Astrocyte of the cerebellum (primary cell): ENCODE measurements at regions of chrX and their contacts with region 1.

Region 1: DNA sequence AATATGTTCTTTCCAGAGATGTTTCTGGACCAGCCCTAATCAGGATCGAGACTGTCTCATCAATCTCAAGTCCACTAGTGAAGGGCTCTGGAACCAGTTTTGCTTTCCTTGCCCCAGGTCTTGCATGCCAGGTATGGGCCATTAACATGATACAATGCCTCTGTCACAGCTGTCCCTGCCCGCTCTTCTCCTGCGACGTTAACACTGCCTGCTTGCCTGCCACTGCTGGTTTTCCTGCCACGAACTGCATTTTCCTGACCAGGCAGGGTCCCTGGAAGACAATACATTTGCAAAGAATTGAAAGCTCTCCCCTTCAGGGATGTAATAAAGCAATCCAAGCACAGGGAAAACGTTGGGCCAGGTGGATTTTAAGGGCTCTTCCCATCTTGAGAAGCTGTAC is 200.3 kb downstream of the MID1 start:
- DNase-seq: no peak
- H3K4me3 ChIP-seq: no peak overlapping the region
- CTCF ChIP-seq: no peak

Region 2: DNA sequence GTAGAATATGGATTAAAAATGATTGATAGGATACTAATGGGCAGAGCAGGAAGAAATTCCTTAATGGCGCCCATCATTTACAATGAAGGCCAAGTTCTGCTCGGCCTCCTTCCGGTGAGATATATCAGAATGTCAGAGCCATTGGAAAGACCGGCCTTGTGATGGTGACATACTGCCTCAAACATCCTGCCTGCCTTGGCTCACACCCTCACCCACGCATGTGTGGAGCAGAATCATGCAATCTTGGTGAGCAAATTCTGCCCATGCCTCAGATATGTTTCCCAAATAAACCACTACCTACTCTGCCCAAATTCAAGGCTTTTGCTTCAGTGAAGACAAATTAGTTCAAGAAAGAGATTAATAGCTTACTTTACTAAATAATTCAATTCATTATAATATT is 37.0 kb after region 1 on chrX:
- in situ Hi-C with region 1: loop called (anchors 5 kb)
- DNase-seq: no peak
- H3K4me3 ChIP-seq: no peak overlapping the region
- CTCF ChIP-seq: no peak